ENCODE measurements at regions of chrX and their contacts with region 1.

Region 1: GRCh38 chrX:53616946-53617345 is 69.6 kb downstream of the HUWE1 start:
- DNase-seq: no peak
- H3K4me3 ChIP-seq: no peak overlapping the region
- H3K27ac ChIP-seq: no peak overlapping the region
- H3K4me1 ChIP-seq: no peaks in the 10 kb centered on the region
- H3K27me3 ChIP-seq: no peaks in the 10 kb centered on the region
- CTCF ChIP-seq: no peak

Region 2: DNA sequence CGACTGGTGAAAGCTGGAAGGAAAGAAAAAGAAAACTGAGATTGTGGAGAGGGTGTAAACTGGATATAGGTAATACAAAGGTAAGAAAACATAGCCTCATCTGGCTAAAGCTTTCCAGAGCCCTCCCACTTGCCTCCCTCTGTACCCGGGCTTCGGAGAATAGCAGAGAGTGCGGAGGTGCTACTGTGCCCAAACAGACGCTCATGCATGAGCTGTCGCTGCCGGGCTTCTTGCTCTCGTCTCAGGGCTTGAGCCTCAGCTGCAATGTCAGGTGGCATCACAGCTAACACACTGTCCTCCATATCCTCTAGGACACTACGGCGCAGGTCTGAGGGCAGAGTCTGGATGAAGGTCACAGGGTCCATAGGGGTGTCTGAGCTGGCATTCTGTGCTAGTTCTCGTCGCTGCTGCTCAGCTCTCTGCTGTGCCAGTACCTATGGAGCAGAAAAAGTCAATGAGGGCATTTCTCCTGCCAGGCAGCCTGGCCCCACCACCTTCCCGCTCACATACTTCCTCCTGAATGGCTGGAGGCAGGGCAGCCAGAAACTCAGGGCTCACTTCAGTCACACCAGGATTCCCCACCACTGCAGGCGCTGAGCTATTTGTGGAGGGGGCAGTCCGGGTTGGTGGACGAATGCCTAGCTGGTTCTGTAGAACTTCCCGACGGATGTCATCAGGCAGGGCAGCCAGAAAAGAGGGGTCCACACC is 66.0 kb before region 1 on chrX:
- intact Hi-C with region 1: loop called (anchors 5 kb)
- DNase-seq: no peak
- H3K4me3 ChIP-seq: no peak overlapping the region
- H3K27ac ChIP-seq: no peak overlapping the region
- H3K4me1 ChIP-seq: no peaks in the 10 kb centered on the region
- H3K27me3 ChIP-seq: no peaks in the 10 kb centered on the region
- CTCF ChIP-seq: no peak

Region 3: GRCh38 chrX:55098691-55099090 is 1481.7 kb after region 1 on chrX:
- intact Hi-C with region 1: no loop called
- DNase-seq: no peak
- H3K4me3 ChIP-seq: no peak overlapping the region
- H3K27ac ChIP-seq: no peak overlapping the region
- H3K4me1 ChIP-seq: no peaks in the 10 kb centered on the region
- H3K27me3 ChIP-seq: no peaks in the 10 kb centered on the region
- CTCF ChIP-seq: no peak